Vagina (tissue), 2 donors: ENCODE measurements at regions of chr17 and their contacts with region 1.

Region 1: DNA sequence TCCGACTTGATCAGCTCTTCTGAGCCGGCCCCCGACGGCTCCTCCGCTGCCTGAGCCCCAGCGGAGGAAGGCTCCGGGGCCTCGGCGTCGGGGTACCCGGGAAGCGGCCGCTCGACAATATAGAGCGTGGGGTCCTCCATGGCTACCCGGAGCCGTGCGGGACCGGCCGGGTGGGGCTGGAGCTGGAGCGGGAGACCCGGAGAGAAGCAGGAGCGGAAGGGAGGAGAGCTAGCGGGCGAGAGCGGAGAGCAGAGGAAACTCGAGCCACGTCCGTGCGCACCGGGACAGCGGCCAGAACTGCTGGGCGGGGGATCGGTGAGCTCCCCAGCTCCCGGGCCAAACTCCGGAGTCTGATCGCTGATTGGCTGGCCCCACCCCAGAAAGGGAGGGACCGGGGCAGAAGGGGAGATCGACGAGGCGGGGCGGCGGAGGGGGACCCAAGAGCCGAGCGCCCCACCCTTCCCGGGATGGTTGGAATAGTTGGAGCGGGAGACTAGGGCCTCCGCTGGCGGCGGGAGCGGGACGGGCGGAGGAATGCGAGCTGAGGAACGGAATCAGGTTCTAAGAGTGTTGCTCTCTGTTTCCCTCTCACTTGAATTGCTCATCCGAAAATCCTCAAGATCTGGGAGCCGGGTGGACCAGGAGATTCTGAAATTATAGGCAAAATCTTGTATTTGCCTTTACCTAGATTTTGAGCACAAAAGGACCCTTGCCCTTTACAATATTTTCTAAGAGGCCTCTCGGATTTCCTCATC is at the start of gene CAVIN1:
- DNase-seq: peak in 1 of 2 donors; percentile 98
- H3K4me3 ChIP-seq: peak within 1 kb of the TSS; percentile 93
- H3K27ac ChIP-seq: peak within 1 kb of the TSS; percentile 96
- H3K4me1 ChIP-seq: peaks cover 57% of the 10 kb centered on the region
- H3K27me3 ChIP-seq: no peaks in the 10 kb centered on the region
- CTCF ChIP-seq: no peak
- POLR2A ChIP-seq: peak in 1 of 2 donors; percentile 97
- total RNA-seq, gene CAVIN1: 268 TPM

Region 2: DNA sequence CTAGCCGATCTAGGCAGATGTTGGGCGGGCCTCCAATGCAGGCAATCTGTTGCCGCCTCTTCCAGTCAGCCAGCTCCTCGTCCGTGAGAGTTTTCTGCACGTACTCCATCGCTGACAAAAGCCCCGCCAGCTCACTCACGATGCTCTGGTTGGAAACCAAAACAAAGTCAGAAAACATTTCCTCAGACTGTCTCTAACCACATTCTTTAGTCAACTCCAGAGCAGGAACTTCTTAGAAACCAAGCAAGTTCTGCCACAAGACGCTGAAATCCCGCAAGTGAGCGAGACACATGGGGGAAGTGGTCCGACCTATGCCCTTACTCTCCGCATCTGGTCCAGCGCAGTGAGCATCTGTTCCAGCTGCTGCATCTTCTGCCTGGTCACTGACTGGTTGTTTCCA is 85.7 kb before region 1 on chr17:
- intact Hi-C with region 1: no loop called
- DNase-seq: no peak
- H3K4me3 ChIP-seq: no peak overlapping the region
- H3K27ac ChIP-seq: no peak overlapping the region
- H3K4me1 ChIP-seq: no peaks in the 10 kb centered on the region
- H3K27me3 ChIP-seq: no peaks in the 10 kb centered on the region
- CTCF ChIP-seq: no peak
- POLR2A ChIP-seq: no peak

Region 3: DNA sequence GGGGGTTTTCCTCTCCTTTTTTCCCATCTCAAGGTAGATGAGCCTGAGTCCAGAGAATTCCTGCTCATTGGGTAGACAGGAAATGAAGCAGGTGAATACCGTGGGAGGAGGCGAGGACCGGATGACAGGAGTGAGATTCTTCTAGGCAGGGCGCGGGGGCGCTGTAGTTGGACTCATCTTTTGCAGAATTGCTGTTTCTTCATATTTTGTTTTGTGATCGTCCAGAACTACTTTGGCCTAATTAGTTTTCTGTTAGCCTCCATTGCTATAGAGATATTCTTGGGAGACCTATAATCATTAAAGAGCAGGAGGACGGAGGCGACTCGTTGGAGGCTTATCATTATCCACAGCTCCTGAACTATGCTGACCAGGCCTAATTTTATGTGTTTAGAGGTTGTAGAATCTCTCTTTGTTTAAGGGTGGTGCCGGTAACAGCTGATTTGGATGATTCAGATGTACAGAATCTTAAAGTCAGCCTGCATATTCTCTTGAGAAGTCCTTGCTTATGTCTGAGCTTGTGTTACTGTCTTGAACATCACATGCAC is 36.2 kb after region 1 on chr17:
- intact Hi-C with region 1: loop called (anchors 2 kb)
- DNase-seq: no peak
- H3K4me3 ChIP-seq: peak overlapping the region; percentile 58 to 77
- H3K27ac ChIP-seq: peak overlapping the region; percentile 97
- H3K4me1 ChIP-seq: peaks cover 41% of the 10 kb centered on the region
- H3K27me3 ChIP-seq: no peaks in the 10 kb centered on the region
- CTCF ChIP-seq: no peak
- POLR2A ChIP-seq: no peak